CD4-positive, alpha-beta T cell (primary cell): ENCODE measurements at regions of chr12 and their contacts with region 1.

Region 1: GRCh38 chr12:121668750-121669520 is 519 bp downstream of the MORN3 start:
- DNase-seq: peak; percentile 38 to 81 (median 59)
- ATAC-seq: no peak
- H3K4me3 ChIP-seq: no peak overlapping the region
- H3K4me3 Mint-ChIP-seq: peak overlapping the region; percentile 65
- H3K27ac ChIP-seq: no peak overlapping the region
- H3K27ac Mint-ChIP-seq: peak overlapping the region; percentile 83
- H3K4me1 ChIP-seq: peaks cover 83% of the 10 kb centered on the region
- H3K4me1 Mint-ChIP-seq: peaks cover 66% of the 10 kb centered on the region
- H3K27me3 ChIP-seq: no peaks in the 10 kb centered on the region
- H3K27me3 Mint-ChIP-seq: no peaks in the 10 kb centered on the region
- CTCF ChIP-seq: peak; percentile 77

Region 2: GRCh38 chr12:121536899-121537813 is 131.8 kb before region 1 on chr12:
- CTCF ChIA-PET with region 1: interaction called, 3 read pairs
- POLR2A ChIA-PET with region 1: interaction called, 15 read pairs
- intact Hi-C with region 1: no loop called
- DNase-seq: peak in 13 of 14 experiments; percentile 16 to 84 (median 37)
- ATAC-seq: peak; percentile 10
- H3K4me3 ChIP-seq: peak overlapping the region; percentile 58
- H3K4me3 Mint-ChIP-seq: peak overlapping the region; percentile 94
- H3K27ac ChIP-seq: peak overlapping the region; percentile 67 to 80
- H3K27ac Mint-ChIP-seq: peak overlapping the region; percentile 93
- H3K4me1 ChIP-seq: peaks cover 60% of the 10 kb centered on the region
- H3K4me1 Mint-ChIP-seq: peaks cover 44% of the 10 kb centered on the region
- H3K27me3 ChIP-seq: no peaks in the 10 kb centered on the region
- H3K27me3 Mint-ChIP-seq: no peaks in the 10 kb centered on the region
- CTCF ChIP-seq: no peak

Region 3: DNA sequence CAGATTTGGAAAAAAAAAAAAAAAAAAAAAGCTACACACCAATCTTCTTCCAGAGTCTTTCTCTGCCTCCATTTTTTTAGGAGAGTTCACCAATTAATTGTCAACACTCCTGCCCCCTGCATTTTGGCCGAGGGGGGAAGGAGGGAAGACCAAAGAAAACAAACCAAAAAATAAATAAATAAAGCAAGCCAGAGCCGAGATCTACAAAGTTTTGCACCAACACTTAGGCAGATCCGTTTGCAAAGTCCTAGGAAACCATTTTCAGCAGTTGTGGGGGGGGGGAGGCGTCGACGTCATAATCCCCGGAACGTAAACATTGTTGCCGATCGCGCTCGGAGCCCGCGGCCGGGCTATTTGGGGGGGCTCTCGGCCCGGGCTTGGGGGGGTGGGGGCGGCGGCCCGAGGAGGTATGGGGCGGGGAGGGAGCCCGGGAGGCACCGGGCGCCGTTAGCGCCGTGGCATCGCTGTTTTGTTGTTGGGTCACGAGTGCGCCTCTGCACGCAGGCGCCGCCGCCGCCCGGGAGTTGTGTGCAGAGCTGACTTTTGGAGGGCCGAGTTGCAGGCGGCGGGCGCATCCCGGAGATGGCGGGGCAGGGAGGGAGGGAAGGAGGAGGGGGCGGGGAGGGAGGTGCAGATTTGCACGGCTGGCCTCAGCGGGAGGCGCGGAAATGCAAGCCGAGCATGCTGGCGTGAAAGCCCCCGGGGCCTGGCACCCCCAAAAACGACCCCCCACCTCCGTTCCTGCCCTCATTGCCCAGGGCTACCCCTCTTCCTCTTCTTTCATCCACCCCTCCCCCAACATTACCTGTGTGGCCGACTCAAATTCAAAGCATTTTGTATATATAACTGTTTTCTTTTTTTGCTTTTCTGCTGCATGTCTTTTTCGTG is 88.7 kb before region 1 on chr12:
- CTCF ChIA-PET with region 1: interaction called, 4 read pairs
- POLR2A ChIA-PET with region 1: interaction called, 43 read pairs
- intact Hi-C with region 1: loop called in 1 of 2 experiments (anchors 5 kb)
- DNase-seq: peak; percentile 64 to 89 (median 78)
- ATAC-seq: peak; percentile 64
- H3K4me3 ChIP-seq: peak overlapping the region; percentile 63
- H3K4me3 Mint-ChIP-seq: peak overlapping the region; percentile 98
- H3K27ac ChIP-seq: peak overlapping the region; percentile 62 to 79
- H3K27ac Mint-ChIP-seq: peak overlapping the region; percentile 98
- H3K4me1 ChIP-seq: peaks cover 52% of the 10 kb centered on the region
- H3K4me1 Mint-ChIP-seq: peaks cover 55% of the 10 kb centered on the region
- H3K27me3 ChIP-seq: no peaks in the 10 kb centered on the region
- H3K27me3 Mint-ChIP-seq: no peaks in the 10 kb centered on the region
- CTCF ChIP-seq: no peak

Region 4: GRCh38 chr12:121637231-121637914 is 31.6 kb before region 1 on chr12:
- CTCF ChIA-PET with region 1: interaction called, 8 read pairs
- POLR2A ChIA-PET with region 1: interaction called, 24 read pairs
- intact Hi-C with region 1: no loop called
- DNase-seq: peak in 13 of 14 experiments; percentile 30 to 83 (median 52)
- ATAC-seq: peak; percentile 77
- H3K4me3 ChIP-seq: peak overlapping the region; percentile 38
- H3K4me3 Mint-ChIP-seq: peak overlapping the region; percentile 72
- H3K27ac ChIP-seq: peak overlapping the region; percentile 74 to 80
- H3K27ac Mint-ChIP-seq: peak overlapping the region; percentile 91
- H3K4me1 ChIP-seq: peaks cover 70% of the 10 kb centered on the region
- H3K4me1 Mint-ChIP-seq: peaks cover 62% of the 10 kb centered on the region
- H3K27me3 ChIP-seq: no peaks in the 10 kb centered on the region
- H3K27me3 Mint-ChIP-seq: no peaks in the 10 kb centered on the region
- CTCF ChIP-seq: no peak

Region 5: GRCh38 chr12:121678716-121679580 is 10.0 kb after region 1 on chr12:
- CTCF ChIA-PET with region 1: interaction called, 14 read pairs
- POLR2A ChIA-PET with region 1: no interaction called
- intact Hi-C with region 1: no loop called
- DNase-seq: no peak
- ATAC-seq: no peak
- H3K4me3 ChIP-seq: no peak overlapping the region
- H3K4me3 Mint-ChIP-seq: peak overlapping the region; percentile 63
- H3K27ac ChIP-seq: no peak overlapping the region
- H3K27ac Mint-ChIP-seq: peak overlapping the region; percentile 83
- H3K4me1 ChIP-seq: peaks cover 11% of the 10 kb centered on the region
- H3K4me1 Mint-ChIP-seq: peaks cover 5% of the 10 kb centered on the region
- H3K27me3 ChIP-seq: no peaks in the 10 kb centered on the region
- H3K27me3 Mint-ChIP-seq: no peaks in the 10 kb centered on the region
- CTCF ChIP-seq: no peak

Region 6: DNA sequence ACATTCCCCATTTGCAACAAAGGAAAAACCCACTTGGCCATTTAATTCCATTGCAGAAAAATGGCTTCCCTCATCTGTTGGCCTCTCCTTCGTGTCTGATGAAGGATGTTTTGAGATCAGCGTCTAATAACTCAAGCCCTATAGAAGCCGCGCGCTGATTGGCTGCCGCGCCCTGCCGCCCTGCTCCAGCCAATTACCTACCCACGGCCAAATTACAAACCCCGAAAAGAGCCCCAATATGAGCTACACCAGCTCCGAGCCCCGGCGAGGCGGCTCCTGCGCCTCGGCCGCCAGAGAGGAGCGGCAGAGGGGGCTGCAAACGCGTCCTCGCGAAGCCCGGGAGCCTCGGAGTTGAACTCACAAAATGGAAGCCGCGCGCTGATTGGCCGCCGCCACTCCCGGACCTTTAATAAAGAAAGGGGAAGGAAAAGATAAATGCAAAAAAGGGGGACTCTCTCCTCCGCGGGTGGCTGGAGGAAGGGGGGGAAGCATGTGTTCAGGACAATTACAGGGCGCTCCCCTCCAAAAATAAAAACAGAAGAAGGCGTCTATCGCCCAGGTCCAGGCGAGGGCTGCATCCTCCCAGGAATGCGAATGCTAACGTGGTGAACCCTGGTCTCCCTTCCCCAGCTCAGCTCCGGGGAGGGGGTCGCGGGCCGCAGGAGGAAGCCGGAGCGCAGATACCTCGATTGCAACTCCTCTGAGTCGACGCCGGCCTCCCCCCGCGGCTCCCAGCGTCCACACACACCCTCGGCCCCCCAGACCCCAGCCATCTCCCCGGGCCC is 134.1 kb after region 1 on chr12:
- CTCF ChIA-PET with region 1: no interaction called
- POLR2A ChIA-PET with region 1: interaction called, 35 read pairs
- intact Hi-C with region 1: no loop called
- DNase-seq: peak; percentile 78 to 96 (median 85)
- ATAC-seq: peak; percentile 47
- H3K4me3 ChIP-seq: peak overlapping the region; percentile 100
- H3K4me3 Mint-ChIP-seq: peak overlapping the region; percentile 99
- H3K27ac ChIP-seq: peak overlapping the region; percentile 96 to 97
- H3K27ac Mint-ChIP-seq: peak overlapping the region; percentile 98
- H3K4me1 ChIP-seq: peaks cover 50% of the 10 kb centered on the region
- H3K4me1 Mint-ChIP-seq: peaks cover 44% of the 10 kb centered on the region
- H3K27me3 ChIP-seq: no peaks in the 10 kb centered on the region
- H3K27me3 Mint-ChIP-seq: no peaks in the 10 kb centered on the region
- CTCF ChIP-seq: no peak